Cardiac septum (tissue), 1 donor: ENCODE measurements at regions of chr4 and their contacts with region 1.

Region 1: GRCh38 chr4:2767705-2768074 is 11.6 kb upstream of the TNIP2 start:
- DNase-seq: no peak

Region 2: GRCh38 chr4:2792711-2793585 is 25.3 kb after region 1 on chr4 and contains the start of gene SH3BP2:
- intact Hi-C with region 1: loop called (anchors 2 kb)
- DNase-seq: peak; percentile 93
- total RNA-seq, gene SH3BP2: 19.1 TPM

Region 3: DNA sequence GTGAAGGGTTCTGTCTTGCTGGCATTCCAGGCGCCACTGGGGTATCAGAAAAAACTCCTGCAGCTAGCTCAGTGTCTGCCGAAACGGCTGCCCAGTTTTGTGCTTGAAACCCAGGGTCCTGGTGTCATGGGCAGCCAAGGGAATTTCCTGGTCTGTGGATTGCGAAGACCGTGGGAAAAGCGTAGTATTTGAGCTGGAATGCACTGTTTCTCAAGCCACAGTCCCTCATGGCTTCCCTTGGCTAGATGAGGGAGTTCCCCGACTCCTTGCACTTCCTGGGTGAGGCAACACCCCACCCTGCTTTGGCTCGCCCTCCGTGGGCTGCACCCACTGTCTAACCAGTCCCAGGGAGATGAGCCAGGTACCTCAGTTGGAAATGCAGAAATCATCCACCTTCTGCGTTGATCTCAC is 155.5 kb after region 1 on chr4:
- intact Hi-C with region 1: no loop called
- DNase-seq: peak; percentile 58